ENCODE measurements at regions of chr20 and their contacts with region 1.

Region 1: GRCh38 chr20:32277361-32278198 is at the start of gene KIF3B:
- DNase-seq: peak; percentile 54 to 92
- H3K4me3 ChIP-seq: peak within 1 kb of the TSS; percentile 87 to 94
- H3K27ac ChIP-seq: peak within 1 kb of the TSS; percentile 65 to 67
- H3K4me1 ChIP-seq: peaks cover 0 to 13% of the 10 kb centered on the region in 2 donors
- H3K27me3 ChIP-seq: no peaks in the 10 kb centered on the region
- CTCF ChIP-seq: peak in 1 of 3 experiments; percentile 4
- total RNA-seq, gene KIF3B: 20.1 TPM

Region 2: DNA sequence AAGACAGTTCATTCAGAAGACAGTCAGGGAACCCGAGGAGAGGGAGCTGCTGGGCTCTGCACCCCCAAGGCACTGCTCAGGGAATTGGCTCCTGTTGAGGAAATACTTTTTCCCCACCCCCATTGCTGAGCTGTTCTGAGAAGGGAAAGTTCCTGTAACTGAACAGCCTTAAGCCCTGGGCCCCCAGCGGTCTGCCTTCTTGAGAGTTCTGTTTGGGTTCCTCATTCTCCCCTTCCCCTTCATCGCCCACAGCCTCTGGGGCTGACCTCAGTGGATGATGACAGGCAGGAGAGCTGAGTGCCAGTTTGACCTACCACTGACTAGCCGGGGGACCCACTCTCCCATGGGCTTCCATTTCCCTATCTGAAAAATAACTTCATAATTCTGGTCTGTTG is 214.8 kb before region 1 on chr20:
- intact Hi-C with region 1: no loop called
- DNase-seq: peak; percentile 53 to 79
- H3K4me3 ChIP-seq: no peak overlapping the region
- H3K27ac ChIP-seq: no peak overlapping the region
- H3K4me1 ChIP-seq: no peaks in the 10 kb centered on the region
- H3K27me3 ChIP-seq: no peaks in the 10 kb centered on the region
- CTCF ChIP-seq: no peak

Region 3: GRCh38 chr20:32109392-32110172 is 168.0 kb before region 1 on chr20 and contains the start of gene TM9SF4:
- intact Hi-C with region 1: loop called (anchors 5 kb)
- DNase-seq: peak; percentile 51 to 94
- H3K4me3 ChIP-seq: peak within 1 kb of the TSS; percentile 88 to 93
- H3K27ac ChIP-seq: peak within 1 kb of the TSS; percentile 99 to 100
- H3K4me1 ChIP-seq: peaks cover 8 to 20% of the 10 kb centered on the region in 2 donors
- H3K27me3 ChIP-seq: no peaks in the 10 kb centered on the region
- CTCF ChIP-seq: no peak
- total RNA-seq, gene TM9SF4: 29.2 TPM

Region 4: DNA sequence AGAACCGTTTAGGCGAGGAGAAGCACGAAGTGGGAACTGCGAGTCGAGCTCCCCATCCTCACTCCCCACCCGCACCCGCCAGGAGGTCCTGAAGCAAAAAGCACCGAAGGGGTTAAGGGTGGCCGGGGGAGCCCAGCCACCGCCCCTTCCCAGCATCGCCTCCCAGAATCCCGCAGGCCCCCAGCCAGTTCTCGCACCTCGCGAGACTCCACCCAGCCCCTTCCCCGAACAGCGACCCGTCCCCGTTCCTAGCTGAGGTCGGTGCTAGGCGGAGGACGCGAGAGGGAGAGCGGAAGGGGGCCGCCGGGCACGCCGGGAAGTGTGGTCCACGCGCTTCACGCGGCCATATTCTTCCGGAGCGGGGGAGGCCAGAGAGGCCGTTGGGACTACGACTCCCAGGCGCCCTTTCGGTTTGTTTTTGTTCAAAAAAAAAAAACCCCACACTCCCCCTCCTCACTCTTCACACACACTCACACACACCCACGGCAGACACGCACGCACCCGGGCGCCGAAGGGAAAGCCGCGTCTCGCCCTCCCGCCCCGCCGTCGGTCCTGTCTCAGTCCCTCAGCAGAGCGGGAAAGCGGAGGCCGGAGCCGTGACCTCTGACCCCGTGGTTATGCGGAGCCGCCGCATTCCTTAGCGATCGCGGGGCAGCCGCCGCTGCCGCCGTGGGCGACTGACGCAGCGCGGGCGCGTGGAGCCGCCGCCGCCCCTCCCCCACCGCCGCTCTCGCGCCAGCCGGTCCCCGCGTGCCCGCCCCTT is 80.5 kb after region 1 on chr20 and contains the start of gene ASXL1:
- intact Hi-C with region 1: loop called (anchors 2 kb)
- DNase-seq: peak; percentile 84 to 98
- H3K4me3 ChIP-seq: peak within 1 kb of the TSS; percentile 70 to 77
- H3K27ac ChIP-seq: peak within 1 kb of the TSS; percentile 96
- H3K4me1 ChIP-seq: peaks cover 0 to 19% of the 10 kb centered on the region in 2 donors
- H3K27me3 ChIP-seq: no peaks in the 10 kb centered on the region
- CTCF ChIP-seq: no peak
- total RNA-seq, gene ASXL1: 37.4 TPM

Region 5: GRCh38 chr20:32484958-32485769 is 207.6 kb after region 1 on chr20:
- intact Hi-C with region 1: loop called (anchors 2 kb)
- DNase-seq: peak; percentile 51 to 87
- H3K4me3 ChIP-seq: peak overlapping the region; percentile 88 to 96
- H3K27ac ChIP-seq: peak overlapping the region; percentile 55 to 64
- H3K4me1 ChIP-seq: peaks cover 0 to 11% of the 10 kb centered on the region in 2 donors
- H3K27me3 ChIP-seq: no peaks in the 10 kb centered on the region
- CTCF ChIP-seq: peak; percentile 69 to 81 (median 74)

Region 6: DNA sequence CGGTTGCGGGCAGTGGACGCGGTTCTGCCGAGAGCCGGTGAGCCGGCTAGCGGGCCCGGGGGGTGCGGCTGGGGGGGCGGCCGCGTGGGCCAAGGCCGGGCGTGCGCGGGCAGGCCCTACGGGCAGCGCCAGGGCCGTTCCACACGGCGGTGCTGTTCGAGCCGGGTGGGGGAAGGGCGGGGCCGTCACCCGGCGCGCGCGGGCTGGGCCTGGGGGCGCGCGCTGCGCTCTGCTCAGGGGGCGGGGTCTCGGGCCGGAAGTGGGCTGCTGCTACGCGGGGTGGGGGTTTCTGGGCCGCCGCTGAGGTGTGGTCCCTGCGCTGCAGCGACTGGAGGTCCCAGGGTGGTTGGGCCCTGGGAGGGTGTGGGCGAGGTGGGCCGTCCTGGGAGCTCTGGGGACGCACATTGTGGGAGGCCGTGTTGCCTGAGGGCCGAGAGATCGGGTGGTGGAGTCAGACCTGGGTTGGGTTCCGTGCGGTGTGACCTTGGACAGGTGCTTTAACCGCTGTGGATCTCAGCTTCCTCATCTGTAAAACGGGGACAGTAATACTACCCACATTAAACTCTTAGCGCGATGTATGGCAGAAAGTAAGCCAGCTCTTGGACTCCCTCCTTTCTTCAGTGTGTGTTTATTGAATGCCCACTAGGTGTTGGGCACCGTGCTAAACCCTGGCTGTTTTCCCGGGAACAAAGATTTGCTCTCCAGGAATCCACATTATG is 542.6 kb after region 1 on chr20:
- intact Hi-C with region 1: loop called (anchors 5 kb)
- DNase-seq: peak in 1 of 2 donors; percentile 68
- H3K4me3 ChIP-seq: peak overlapping the region; percentile 88 to 91
- H3K27ac ChIP-seq: peak overlapping the region; percentile 89 to 90
- H3K4me1 ChIP-seq: peaks cover 0 to 19% of the 10 kb centered on the region in 2 donors
- H3K27me3 ChIP-seq: no peaks in the 10 kb centered on the region
- CTCF ChIP-seq: no peak